HCT116 (cell line): ENCODE measurements at regions of chr14 and their contacts with region 1.

Region 1: DNA sequence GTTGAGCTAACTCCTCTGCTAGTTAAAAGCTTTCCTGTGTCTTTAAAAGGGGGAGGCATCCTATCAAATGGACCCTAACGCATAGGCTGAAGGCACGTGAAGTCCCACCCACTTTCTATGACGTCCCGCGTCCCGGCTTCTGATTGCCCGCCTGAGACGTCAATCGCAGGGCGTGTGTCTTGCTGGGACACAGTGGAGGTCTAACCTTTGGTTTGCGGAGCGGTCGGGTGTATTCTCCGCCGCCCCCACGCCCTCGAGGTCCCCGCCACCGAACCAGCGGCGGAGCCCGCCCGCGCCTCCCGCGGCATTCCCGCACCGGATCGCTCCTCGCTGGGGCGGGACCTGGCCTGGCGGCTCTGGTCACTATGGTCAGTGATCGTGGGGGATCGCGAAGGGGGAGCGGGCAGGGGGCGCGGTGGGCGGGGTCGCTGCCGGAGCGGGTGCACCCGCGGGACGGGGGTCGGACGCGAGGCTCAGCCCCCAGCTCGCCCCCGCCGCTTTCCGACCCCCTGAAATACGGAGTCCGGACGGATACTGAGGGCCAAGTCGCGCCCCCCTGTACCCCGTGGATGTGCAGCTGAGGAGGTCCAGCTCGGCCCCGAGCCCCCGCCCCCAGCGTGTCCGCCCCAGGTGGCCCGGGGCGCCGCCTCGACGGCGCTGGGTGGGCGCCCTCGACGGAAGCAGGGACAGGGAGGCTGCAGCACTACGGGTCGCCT is at the start of gene OTUB2:
- DNase-seq: peak; percentile 97
- ATAC-seq: peak; percentile 83
- H3K4me3 ChIP-seq: peak within 1 kb of the TSS; percentile 49 to 66
- H3K27ac ChIP-seq: peak within 1 kb of the TSS; percentile 6; the same call in 1 of the 2 replicates
- H3K4me1 ChIP-seq: peaks cover 29 to 53% of the 10 kb centered on the region in 2 experiments
- H3K27me3 ChIP-seq: no peaks in the 10 kb centered on the region
- CTCF ChIP-seq: no peak
- POLR2A ChIP-seq: no peak
- RAD21 ChIP-seq: no peak
- total RNA-seq, gene OTUB2: 6.6 TPM

Region 2: DNA sequence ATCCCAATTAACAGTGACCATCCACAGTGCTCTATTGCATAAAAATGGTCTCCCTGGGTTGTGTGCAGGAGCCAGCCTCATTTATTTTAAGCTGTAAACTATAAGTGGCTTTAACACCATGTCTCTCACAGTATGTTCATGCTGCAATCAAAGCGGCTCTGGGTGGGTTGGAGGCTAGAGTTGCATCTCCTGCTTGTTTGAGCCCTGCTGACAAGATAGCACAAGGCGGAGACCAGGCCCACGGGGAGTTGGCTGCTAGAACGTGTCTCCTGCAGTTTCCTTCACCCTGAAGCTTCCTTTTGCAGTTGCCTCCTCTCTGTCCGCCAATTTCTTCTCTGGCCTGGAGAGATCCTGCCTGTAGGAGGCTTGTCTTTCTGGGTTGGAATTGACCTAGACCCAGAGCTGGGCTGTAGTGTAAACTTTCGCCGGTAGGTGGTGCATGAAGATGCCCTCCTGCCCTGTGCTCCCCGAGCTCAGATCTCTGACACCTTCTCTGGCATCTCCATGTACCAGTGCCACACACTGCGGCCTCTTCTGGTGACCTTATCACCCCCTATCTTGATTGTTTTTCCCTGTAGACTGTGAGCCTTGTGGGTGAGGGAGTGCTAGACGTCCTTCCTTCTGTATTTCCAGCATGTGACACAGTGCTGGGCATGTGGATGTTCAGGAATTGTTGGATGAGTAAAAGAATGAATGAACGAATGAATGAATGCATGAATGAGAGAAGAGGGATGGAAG is 10.2 kb after region 1 on chr14:
- CTCF ChIA-PET with region 1: interaction called, 16 read pairs
- POLR2A ChIA-PET with region 1: interaction called, 3 read pairs
- RAD21 ChIA-PET with region 1: interaction called in 1 of 2 experiments, 5 read pairs
- intact Hi-C with region 1: no loop called
- DNase-seq: peak; percentile 64
- ATAC-seq: peak; percentile 99
- H3K4me3 ChIP-seq: no peak overlapping the region
- H3K27ac ChIP-seq: no peak overlapping the region
- H3K4me1 ChIP-seq: peaks cover 3 to 16% of the 10 kb centered on the region in 2 experiments; a peak in 3 of 4 replicates
- H3K27me3 ChIP-seq: no peaks in the 10 kb centered on the region
- CTCF ChIP-seq: peak; percentile 88 to 90 (median 90)
- POLR2A ChIP-seq: no peak
- RAD21 ChIP-seq: peak; percentile 72